Caco-2 (cell line): ENCODE measurements at regions of chr12 and their contacts with region 1.

Region 1: GRCh38 chr12:15590180-15590826 is 198.9 kb downstream of the EPS8 start:
- DNase-seq: peak; percentile 60 to 79
- H3K4me3 ChIP-seq: peak overlapping the region; percentile 17
- H3K4me3 Mint-ChIP-seq: peak overlapping the region; percentile 66
- H3K27ac Mint-ChIP-seq: peak overlapping the region; percentile 45
- H3K4me1 ChIP-seq: no peaks in the 10 kb centered on the region
- H3K4me1 Mint-ChIP-seq: peaks cover 15% of the 10 kb centered on the region
- H3K27me3 ChIP-seq: no peaks in the 10 kb centered on the region; the same call in 1 of the 2 replicates
- H3K27me3 Mint-ChIP-seq: peaks cover 9% of the 10 kb centered on the region
- CTCF ChIP-seq: peak; percentile 94 to 96

Region 2: GRCh38 chr12:15601210-15601800 is 11.0 kb after region 1 on chr12:
- CTCF ChIA-PET with region 1: no interaction called
- POLR2A ChIA-PET with region 1: no interaction called
- intact Hi-C with region 1: no loop called
- DNase-seq: no peak
- H3K4me3 ChIP-seq: no peak overlapping the region
- H3K4me3 Mint-ChIP-seq: no peak overlapping the region
- H3K27ac Mint-ChIP-seq: no peak overlapping the region
- H3K4me1 ChIP-seq: no peaks in the 10 kb centered on the region
- H3K4me1 Mint-ChIP-seq: peaks cover 6% of the 10 kb centered on the region
- H3K27me3 ChIP-seq: no peaks in the 10 kb centered on the region
- H3K27me3 Mint-ChIP-seq: no peaks in the 10 kb centered on the region
- CTCF ChIP-seq: no peak

Region 3: DNA sequence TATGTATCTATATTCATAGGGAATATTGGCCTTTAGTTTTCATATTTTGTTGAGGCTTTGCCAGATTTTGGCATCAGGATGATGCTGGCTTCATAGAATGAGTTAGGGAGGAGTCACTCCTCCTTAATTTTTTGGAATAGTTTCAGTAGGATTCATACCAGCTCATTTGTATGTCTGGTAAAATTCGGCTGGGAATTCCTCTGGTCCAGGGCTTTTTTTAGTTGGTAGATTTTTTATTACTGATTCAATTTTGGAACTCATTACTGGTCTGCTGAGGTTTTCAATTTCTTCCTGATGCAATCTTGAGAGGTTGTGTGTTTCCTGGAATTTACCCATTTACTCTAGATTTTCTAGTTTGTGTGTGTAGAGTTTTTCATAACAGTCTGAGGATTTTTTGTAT is 23.7 kb after region 1 on chr12:
- CTCF ChIA-PET with region 1: no interaction called
- POLR2A ChIA-PET with region 1: no interaction called
- intact Hi-C with region 1: no loop called
- DNase-seq: no peak
- H3K4me3 ChIP-seq: no peak overlapping the region
- H3K4me3 Mint-ChIP-seq: no peak overlapping the region
- H3K27ac Mint-ChIP-seq: no peak overlapping the region
- H3K4me1 ChIP-seq: no peaks in the 10 kb centered on the region
- H3K4me1 Mint-ChIP-seq: no peaks in the 10 kb centered on the region
- H3K27me3 ChIP-seq: no peaks in the 10 kb centered on the region
- H3K27me3 Mint-ChIP-seq: no peaks in the 10 kb centered on the region
- CTCF ChIP-seq: no peak

Region 4: GRCh38 chr12:15636060-15636890 is 46.0 kb after region 1 on chr12:
- CTCF ChIA-PET with region 1: interaction called, 3 read pairs
- POLR2A ChIA-PET with region 1: no interaction called
- intact Hi-C with region 1: loop called (anchors 1 kb)
- DNase-seq: peak in 1 of 2 experiments; percentile 11
- H3K4me3 ChIP-seq: no peak overlapping the region
- H3K4me3 Mint-ChIP-seq: no peak overlapping the region
- H3K27ac Mint-ChIP-seq: no peak overlapping the region
- H3K4me1 ChIP-seq: peaks cover 20% of the 10 kb centered on the region
- H3K4me1 Mint-ChIP-seq: peaks cover 33% of the 10 kb centered on the region
- H3K27me3 ChIP-seq: no peaks in the 10 kb centered on the region
- H3K27me3 Mint-ChIP-seq: no peaks in the 10 kb centered on the region
- CTCF ChIP-seq: no peak

Region 5: DNA sequence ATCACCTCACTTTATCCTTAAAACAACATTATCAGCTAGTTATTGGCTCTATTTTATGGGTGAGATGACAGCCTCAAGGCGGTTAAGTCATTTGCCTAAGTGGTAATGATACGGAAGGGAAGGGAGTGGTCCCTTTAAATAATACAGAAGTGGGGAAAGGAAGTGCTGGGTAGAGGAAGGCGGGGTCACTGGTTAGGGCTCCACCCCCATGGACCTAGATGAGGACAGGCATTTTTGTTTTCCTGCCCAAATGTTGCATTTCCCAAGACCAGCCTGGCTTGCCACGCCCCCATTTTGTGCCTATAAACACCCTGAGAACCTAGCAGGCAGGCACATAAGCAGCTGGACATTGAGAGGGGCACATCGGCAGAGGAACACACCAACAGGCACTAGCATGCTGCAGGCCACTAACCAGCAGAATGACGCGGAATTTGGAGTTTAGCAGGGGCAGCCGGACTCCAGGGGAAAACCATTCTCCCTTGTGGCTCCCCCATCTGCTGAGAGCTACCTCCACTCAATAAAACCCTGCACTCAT is 98.0 kb after region 1 on chr12:
- CTCF ChIA-PET with region 1: no interaction called
- POLR2A ChIA-PET with region 1: no interaction called
- intact Hi-C with region 1: loop called (anchors 10 kb)
- DNase-seq: peak; percentile 50 to 51
- H3K4me3 ChIP-seq: peak overlapping the region; percentile 8
- H3K4me3 Mint-ChIP-seq: peak overlapping the region; percentile 23
- H3K27ac Mint-ChIP-seq: no peak overlapping the region
- H3K4me1 ChIP-seq: peaks cover 23% of the 10 kb centered on the region
- H3K4me1 Mint-ChIP-seq: peaks cover 15% of the 10 kb centered on the region
- H3K27me3 ChIP-seq: no peaks in the 10 kb centered on the region
- H3K27me3 Mint-ChIP-seq: no peaks in the 10 kb centered on the region
- CTCF ChIP-seq: no peak

Region 6: DNA sequence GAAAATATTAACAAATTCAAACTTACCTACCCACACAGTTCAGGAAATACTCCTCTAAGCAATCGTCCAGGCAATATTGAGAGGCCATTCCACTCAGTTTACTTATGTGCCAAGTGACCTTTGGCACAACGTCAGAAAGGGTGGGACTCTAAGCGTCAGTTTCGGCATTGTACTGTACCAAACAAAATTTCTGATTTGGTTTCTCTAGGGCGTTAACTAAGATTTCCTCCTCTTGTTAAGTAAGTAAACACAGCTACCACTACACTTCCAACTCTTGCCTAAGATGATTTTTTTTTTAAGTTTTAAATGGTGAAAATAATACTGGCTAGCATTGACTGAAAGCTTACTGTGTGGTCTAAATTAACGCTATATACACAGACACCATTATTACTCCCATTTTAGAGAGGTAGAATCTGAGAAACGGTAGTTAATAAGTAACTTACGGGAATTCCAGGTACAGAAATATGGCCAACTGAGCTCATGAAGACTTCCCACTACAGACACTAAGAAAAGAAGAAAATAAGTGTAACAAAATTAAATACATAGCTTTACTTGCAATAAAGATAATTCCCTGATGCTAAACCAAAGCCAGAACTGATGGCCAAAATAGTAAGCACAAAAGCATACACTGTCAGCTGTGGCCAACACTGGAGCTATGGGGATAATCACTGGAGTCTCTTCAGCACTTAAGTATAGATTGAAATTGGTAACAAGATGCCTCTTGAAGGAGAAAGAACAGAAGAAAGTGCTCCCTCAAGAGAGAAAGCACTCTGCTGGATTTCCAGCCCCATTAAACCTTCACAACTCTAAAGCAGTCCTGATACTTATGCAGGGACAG is 122.7 kb after region 1 on chr12:
- CTCF ChIA-PET with region 1: interaction called, 3 read pairs
- POLR2A ChIA-PET with region 1: no interaction called
- intact Hi-C with region 1: loop called (anchors 2 kb)
- DNase-seq: peak; percentile 53 to 67
- H3K4me3 ChIP-seq: peak overlapping the region; percentile 32
- H3K4me3 Mint-ChIP-seq: peak overlapping the region; percentile 86
- H3K27ac Mint-ChIP-seq: peak overlapping the region; percentile 96
- H3K4me1 ChIP-seq: peaks cover 26% of the 10 kb centered on the region
- H3K4me1 Mint-ChIP-seq: peaks cover 17% of the 10 kb centered on the region
- H3K27me3 ChIP-seq: no peaks in the 10 kb centered on the region
- H3K27me3 Mint-ChIP-seq: no peaks in the 10 kb centered on the region
- CTCF ChIP-seq: no peak

Region 7: DNA sequence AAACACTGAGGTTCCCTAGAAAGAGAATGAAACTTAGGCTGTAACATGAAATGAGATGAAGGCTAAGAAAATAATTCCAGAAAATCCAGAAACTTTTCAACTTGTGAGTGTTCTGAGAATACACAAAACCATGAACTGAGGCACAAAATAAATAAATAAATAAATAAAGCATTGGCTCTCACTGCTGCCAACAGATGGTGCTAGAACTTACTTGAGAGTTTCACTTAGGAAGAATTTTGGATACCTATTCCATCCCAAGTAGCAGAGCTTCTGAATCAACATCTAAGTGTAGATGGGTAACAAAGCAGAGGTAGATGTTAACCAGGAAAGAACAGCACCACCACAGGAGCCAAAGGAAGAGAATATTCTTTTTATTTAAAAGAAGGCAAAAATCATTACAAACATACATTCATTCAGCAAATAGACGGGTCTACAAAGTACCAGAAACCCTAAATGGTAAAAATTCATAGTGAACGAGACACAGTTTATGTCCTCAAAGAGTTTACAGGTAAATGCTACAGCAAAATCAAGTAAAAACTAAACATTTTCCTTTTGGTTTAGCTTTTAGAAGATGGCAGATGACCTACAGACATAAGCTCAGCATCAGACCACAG is 182.2 kb after region 1 on chr12:
- CTCF ChIA-PET with region 1: no interaction called
- POLR2A ChIA-PET with region 1: no interaction called
- intact Hi-C with region 1: loop called (anchors 1 kb)
- DNase-seq: peak in 1 of 2 experiments; percentile 39
- H3K4me3 ChIP-seq: no peak overlapping the region
- H3K4me3 Mint-ChIP-seq: no peak overlapping the region
- H3K27ac Mint-ChIP-seq: no peak overlapping the region
- H3K4me1 ChIP-seq: no peaks in the 10 kb centered on the region
- H3K4me1 Mint-ChIP-seq: no peaks in the 10 kb centered on the region
- H3K27me3 ChIP-seq: no peaks in the 10 kb centered on the region
- H3K27me3 Mint-ChIP-seq: peaks cover 1% of the 10 kb centered on the region
- CTCF ChIP-seq: peak; percentile 74 to 77

Region 8: DNA sequence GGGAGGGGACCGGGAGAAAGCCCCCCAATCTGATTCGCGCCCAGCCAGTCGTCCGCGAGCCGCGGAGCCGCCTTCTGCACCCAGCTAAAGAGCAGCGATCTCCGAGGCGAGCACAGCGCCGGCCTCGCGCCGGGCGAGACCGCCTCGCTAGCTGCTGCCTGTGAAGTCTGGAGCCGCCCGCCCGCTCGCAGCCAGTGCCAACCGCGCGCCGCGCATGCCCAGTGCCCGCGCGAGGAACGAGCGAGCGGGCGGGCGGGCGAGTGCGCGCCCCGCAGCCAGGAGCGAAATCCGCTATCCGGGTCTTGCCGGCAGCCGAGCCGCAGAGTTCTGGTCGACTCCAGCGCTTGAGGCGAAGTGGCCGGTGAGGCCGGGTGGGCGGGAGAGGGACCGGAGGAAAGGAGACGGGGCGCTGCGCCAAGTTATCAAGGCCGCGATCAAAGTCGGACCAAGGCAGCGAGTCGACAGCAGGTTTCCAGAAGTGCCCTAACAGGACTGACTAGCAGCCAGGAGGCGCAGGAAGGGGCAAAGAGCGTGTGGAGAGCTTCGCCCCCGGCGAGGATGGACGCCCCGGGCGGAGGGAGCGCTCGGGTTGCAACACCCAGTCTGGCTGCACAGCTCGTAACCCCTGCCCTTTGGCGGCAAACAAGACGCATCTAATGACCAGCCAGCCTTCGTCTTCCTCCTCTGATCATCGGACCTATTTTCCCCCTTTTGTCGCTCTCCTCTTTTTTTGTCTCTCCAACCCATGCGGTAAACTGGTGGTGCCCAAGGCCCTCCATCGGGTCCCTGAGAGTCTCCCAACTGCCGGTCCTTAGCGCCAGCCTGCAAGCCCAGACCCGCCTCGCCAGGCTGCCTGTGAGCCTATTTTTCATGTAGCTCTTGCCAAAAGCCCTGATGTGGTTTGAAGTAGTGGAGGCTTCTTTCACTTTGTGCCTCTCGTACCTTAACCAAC is 199.2 kb after region 1 on chr12 and contains the start of gene EPS8:
- CTCF ChIA-PET with region 1: interaction called, 4 read pairs
- POLR2A ChIA-PET with region 1: no interaction called
- intact Hi-C with region 1: loop called (anchors 1 kb)
- DNase-seq: peak; percentile 91 to 97
- H3K4me3 ChIP-seq: peak within 1 kb of the TSS; percentile 76
- H3K4me3 Mint-ChIP-seq: peak within 1 kb of the TSS; percentile 75
- H3K27ac Mint-ChIP-seq: peak within 1 kb of the TSS; percentile 62
- H3K4me1 ChIP-seq: 0 out of 2 replicates have a peak, but pooled peaks cover 3% of the 10 kb centered on the region
- H3K4me1 Mint-ChIP-seq: peaks cover 5% of the 10 kb centered on the region
- H3K27me3 ChIP-seq: peaks cover 1% of the 10 kb centered on the region; the same call in 1 of the 2 replicates
- H3K27me3 Mint-ChIP-seq: peaks cover 13% of the 10 kb centered on the region
- CTCF ChIP-seq: no peak
- total RNA-seq, gene EPS8: 13.9 and 20.1 TPM in 2 replicates

Region 9: DNA sequence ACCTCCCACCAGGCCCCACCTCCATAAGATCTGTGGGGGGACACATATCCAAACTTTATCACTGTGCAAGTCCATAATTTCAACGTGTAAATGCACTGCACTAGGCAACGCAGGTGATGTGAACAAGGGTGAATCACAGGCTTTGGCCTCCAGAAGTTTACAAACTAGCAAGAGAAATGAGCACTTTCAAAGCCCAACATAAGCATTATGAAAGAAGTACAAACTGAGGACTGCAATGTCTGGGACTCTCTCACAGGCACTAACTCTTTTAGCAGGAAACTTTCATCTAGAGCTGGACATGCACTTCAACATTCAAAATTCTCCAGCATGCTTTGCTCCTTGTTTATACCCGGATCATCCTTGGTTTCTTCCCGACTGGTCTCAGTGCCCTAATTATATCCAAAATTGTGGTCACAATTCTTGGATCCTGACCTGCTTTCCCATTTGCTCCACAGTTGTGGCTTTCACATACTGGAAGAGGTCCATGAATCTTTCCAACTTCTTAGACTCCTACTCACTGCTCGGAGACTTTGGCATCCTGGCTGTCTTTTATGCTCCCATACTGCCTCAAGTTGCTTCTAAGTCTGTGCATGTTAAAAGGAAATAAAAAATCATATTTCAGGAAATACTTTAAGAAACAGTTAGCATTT is 247.0 kb after region 1 on chr12:
- CTCF ChIA-PET with region 1: no interaction called
- POLR2A ChIA-PET with region 1: no interaction called
- intact Hi-C with region 1: no loop called
- DNase-seq: no peak
- H3K4me3 ChIP-seq: no peak overlapping the region
- H3K4me3 Mint-ChIP-seq: no peak overlapping the region
- H3K27ac Mint-ChIP-seq: no peak overlapping the region
- H3K4me1 ChIP-seq: no peaks in the 10 kb centered on the region
- H3K4me1 Mint-ChIP-seq: no peaks in the 10 kb centered on the region
- H3K27me3 ChIP-seq: no peaks in the 10 kb centered on the region
- H3K27me3 Mint-ChIP-seq: peaks cover 9% of the 10 kb centered on the region
- CTCF ChIP-seq: no peak